Activated naive CD4-positive, alpha-beta T cell treated with anti-CD3 and anti-CD28 coated beads, Interleukin-2, amount 10 ng/mL, durations not matched to agents 7 days and 5 days (primary cell): ENCODE measurements at regions of chr3 and their contacts with region 1.

Region 1: GRCh38 chr3:170055209-170055608 is 17.4 kb downstream of the GPR160 start:
- DNase-seq: no peak
- H3K4me3 Mint-ChIP-seq: no peak overlapping the region
- H3K27ac Mint-ChIP-seq: no peak overlapping the region
- H3K4me1 Mint-ChIP-seq: peaks cover 33% of the 10 kb centered on the region
- H3K27me3 Mint-ChIP-seq: no peaks in the 10 kb centered on the region

Region 2: DNA sequence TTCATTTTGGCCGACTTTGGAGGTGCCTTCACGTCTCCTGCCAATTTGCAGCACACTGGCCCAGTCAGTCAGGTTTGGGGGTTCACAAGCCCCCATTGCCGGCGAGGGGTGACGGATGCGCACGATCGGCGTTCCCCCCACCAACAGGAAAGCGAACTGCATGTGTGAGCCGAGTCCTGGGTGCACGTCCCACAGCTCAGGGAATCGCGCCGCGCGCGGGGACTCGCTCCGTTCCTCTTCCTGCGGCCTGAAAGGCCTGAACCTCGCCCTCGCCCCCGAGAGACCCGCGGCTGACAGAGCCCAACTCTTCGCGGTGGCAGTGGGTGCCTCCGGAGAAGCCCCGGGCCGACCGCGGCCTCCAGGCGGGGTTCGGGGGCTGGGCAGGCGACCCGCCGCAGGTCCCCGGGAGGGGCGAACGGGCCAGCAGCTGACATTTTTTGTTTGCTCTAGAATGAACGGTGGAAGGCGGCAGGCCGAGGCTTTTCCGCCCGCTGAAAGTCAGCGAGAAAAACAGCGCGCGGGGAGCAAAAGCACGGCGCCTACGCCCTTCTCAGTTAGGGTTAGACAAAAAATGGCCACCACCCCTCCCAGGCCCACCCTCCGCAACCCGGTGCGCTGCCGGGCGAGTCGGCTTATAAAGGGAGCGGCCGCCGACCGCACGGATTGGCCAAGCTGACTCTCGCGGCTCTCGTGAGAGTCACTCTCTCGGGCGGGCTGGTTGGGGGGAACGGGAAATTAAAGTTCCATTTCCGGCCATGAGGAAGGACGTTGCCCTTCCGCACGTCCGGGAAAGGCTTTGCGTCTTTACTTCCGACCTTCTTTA is 290.5 kb before region 1 on chr3 and contains the start of gene TERC:
- CTCF ChIA-PET with region 1: interaction called, 10 read pairs
- DNase-seq: peak; percentile 94
- H3K4me3 Mint-ChIP-seq: peak within 1 kb of the TSS; percentile 95
- H3K27ac Mint-ChIP-seq: peak within 1 kb of the TSS; percentile 98
- H3K4me1 Mint-ChIP-seq: peaks cover 39% of the 10 kb centered on the region
- H3K27me3 Mint-ChIP-seq: peaks cover 10% of the 10 kb centered on the region

Region 3: GRCh38 chr3:169863458-169863899 is 191.7 kb before region 1 on chr3:
- CTCF ChIA-PET with region 1: interaction called, 18 read pairs
- DNase-seq: peak; percentile 76
- H3K4me3 Mint-ChIP-seq: no peak overlapping the region
- H3K27ac Mint-ChIP-seq: no peak overlapping the region
- H3K4me1 Mint-ChIP-seq: peaks cover 33% of the 10 kb centered on the region
- H3K27me3 Mint-ChIP-seq: peaks cover 8% of the 10 kb centered on the region

Region 4: DNA sequence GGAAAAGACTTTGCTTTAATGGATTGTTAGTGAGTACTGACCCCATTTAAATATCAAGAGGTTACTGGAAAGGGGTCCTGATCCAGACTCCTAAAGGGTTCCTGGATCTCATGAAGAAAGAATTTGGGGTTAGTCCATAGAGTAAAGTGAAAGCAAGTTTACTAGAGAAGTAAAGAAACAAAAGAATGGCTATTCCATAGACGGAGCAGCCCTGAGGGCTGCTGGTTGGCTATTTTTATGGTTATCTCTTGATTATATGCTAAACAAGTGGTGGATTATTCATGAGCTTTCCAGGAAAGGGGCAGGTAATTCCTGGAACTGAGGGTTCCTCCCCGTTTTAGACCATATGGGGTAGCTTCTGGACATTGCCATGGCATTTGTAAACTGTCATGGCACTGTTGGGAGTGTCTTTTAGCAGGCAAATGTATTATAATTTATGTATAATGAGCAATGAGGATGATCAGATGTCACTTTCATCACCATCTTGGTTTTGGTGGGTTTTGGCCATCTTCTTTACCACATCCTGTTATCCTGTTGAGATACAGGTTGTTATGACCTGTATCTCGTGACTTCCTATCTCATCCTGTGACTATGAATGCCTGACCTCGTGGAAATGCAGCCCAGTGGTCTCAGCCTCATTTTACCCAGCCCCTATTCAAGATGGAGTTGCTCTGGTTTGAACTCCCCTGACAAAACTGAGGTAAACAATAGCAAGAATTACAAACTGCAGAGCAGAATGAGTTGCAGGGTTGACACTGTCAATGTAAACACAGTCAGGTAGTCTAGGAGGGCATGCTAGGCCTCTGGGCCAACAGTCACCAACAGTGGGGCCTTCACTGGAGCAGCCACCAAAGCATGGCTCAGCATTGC is 27.7 kb before region 1 on chr3:
- CTCF ChIA-PET with region 1: no interaction called
- DNase-seq: peak; percentile 70
- H3K4me3 Mint-ChIP-seq: no peak overlapping the region
- H3K27ac Mint-ChIP-seq: peak overlapping the region; percentile 86
- H3K4me1 Mint-ChIP-seq: peaks cover 54% of the 10 kb centered on the region
- H3K27me3 Mint-ChIP-seq: no peaks in the 10 kb centered on the region